ENCODE measurements at regions of chr13 and their contacts with region 1.

Region 1: GRCh38 chr13:24328145-24328544 is 18.8 kb downstream of the C1QTNF9 start:
- DNase-seq: no peak
- ATAC-seq: no peak
- H3K4me3 ChIP-seq: no peak overlapping the region
- H3K27ac ChIP-seq: no peak overlapping the region
- H3K4me1 ChIP-seq: no peaks in the 10 kb centered on the region
- H3K27me3 ChIP-seq: no peaks in the 10 kb centered on the region
- CTCF ChIP-seq: no peak
- POLR2A ChIP-seq: no peak
- RAD21 ChIP-seq: no peak

Region 2: GRCh38 chr13:24540236-24541126 is 212.3 kb after region 1 on chr13:
- CTCF ChIA-PET with region 1: no interaction called
- POLR2A ChIA-PET with region 1: no interaction called
- RAD21 ChIA-PET with region 1: no interaction called
- intact Hi-C with region 1: loop called (anchors 2 kb)
- DNase-seq: no peak
- ATAC-seq: peak; percentile 93
- H3K4me3 ChIP-seq: no peak overlapping the region
- H3K27ac ChIP-seq: no peak overlapping the region
- H3K4me1 ChIP-seq: no peaks in the 10 kb centered on the region
- H3K27me3 ChIP-seq: no peaks in the 10 kb centered on the region
- CTCF ChIP-seq: peak in 2 of 3 experiments; percentile 35 to 49; a peak in 4 of 6 replicates
- POLR2A ChIP-seq: no peak
- RAD21 ChIP-seq: no peak

Region 3: GRCh38 chr13:24557081-24557480 is 228.9 kb after region 1 on chr13:
- CTCF ChIA-PET with region 1: interaction called, 13 read pairs
- POLR2A ChIA-PET with region 1: no interaction called
- RAD21 ChIA-PET with region 1: no interaction called
- intact Hi-C with region 1: loop called (anchors 5 kb)
- DNase-seq: no peak
- ATAC-seq: no peak
- H3K4me3 ChIP-seq: no peak overlapping the region
- H3K27ac ChIP-seq: no peak overlapping the region
- H3K4me1 ChIP-seq: no peaks in the 10 kb centered on the region
- H3K27me3 ChIP-seq: no peaks in the 10 kb centered on the region
- CTCF ChIP-seq: no peak
- POLR2A ChIP-seq: no peak
- RAD21 ChIP-seq: no peak